Pancreas (tissue), 10 donors: ENCODE measurements at regions of chr9 and their contacts with region 1.

Region 1: DNA sequence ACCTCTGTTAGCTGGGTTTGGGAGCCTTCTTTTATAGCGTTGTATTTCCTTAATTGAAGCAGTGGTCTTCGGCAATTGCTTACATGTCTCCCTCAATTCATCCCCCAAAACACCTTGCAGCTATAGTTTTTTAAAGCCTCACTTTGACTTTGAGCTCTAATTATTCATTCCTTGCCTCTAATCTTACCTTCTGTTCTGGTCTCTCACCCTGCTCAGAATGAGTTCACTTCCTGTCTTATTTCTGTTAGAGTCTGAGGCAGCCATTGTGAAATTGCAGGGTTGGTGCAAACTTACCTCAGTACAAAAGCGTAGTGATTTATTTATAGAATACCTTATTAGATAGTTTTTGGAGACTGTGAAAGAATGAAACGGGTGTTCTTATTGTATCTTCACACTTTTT is 35.0 kb downstream of the AOPEP start:
- DNase-seq: no peak
- ATAC-seq: no peak
- H3K4me3 ChIP-seq: no peak overlapping the region
- H3K27ac ChIP-seq: no peak overlapping the region
- H3K4me1 ChIP-seq: no peaks in the 10 kb centered on the region
- H3K27me3 ChIP-seq: no peaks in the 10 kb centered on the region
- CTCF ChIP-seq: no peak

Region 2: GRCh38 chr9:94843134-94843533 is 81.7 kb after region 1 on chr9:
- intact Hi-C with region 1: loop called in 1 of 3 experiments (anchors 5 kb)
- DNase-seq: no peak
- ATAC-seq: no peak
- H3K4me3 ChIP-seq: no peak overlapping the region
- H3K27ac ChIP-seq: no peak overlapping the region
- H3K4me1 ChIP-seq: peaks cover 6 to 10% (median 9%) of the 10 kb centered on the region in 3 donors
- H3K27me3 ChIP-seq: no peaks in the 10 kb centered on the region
- CTCF ChIP-seq: no peak